Heart left ventricle (tissue), 16 donors: ENCODE measurements at regions of chr9 and their contacts with region 1.

Region 1: GRCh38 chr9:129610473-129611301 is 10.2 kb downstream of the C9orf50 start:
- DNase-seq: peak; percentile 82 to 92 (median 84)
- ATAC-seq: peak in 3 of 4 donors; percentile 12 to 66 (median 54)
- H3K4me3 ChIP-seq: peak overlapping the region; percentile 44 to 74 (median 66)
- H3K27ac ChIP-seq: peak overlapping the region; percentile 29 to 98 (median 90)
- H3K4me1 ChIP-seq: peaks cover 0 to 47% (median 39%) of the 10 kb centered on the region in 12 donors
- H3K27me3 ChIP-seq: no peaks in the 10 kb centered on the region
- CTCF ChIP-seq: peak; percentile 66 to 98 (median 91)
- POLR2A ChIP-seq: peak in 1 of 2 donors; percentile 41

Region 2: DNA sequence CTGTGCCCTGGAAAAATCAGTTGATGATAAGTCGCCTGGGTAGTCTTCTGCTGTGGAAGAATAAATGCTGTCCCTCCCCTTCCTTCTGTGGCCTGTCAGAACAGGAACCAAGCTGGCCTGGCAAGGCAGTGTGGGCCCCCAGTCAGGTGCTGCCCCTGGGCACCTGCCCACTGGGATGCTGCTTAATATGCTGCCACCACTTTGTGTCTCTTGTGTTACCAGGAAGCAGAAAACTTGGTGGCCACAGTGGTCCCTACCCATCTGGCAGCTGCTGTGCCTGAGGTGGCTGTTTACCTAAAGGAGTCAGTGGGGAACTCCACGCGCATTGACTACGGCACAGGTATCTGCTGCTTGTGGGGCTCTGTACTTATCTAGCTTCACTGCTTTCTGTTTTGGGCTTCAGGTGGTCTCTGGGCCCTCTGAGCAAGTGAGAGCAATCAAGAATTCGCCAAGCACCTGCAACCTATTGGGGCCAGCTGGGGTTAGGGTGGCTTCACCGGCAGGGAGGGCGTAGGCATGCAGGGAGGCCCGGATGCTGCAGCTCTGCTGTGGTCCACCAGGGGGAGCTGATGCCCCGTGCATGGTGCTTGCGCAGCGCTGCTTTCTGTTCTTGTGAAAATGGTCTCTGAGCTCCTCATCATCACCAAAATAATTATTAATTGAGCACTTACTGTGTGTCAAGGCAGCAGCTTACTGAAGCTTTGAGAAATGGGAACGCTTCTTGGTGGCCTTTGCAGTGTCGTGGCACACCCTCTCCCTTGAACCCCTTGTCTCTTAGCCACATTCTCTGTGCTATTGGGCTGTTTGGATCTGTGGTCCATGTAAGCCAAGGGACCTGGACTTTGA is 479.2 kb before region 1 on chr9:
- intact Hi-C with region 1: loop called in 5 of 10 experiments (anchors 1 to 2 kb)
- DNase-seq: peak; percentile 75 to 87 (median 78)
- ATAC-seq: peak; percentile 55 to 88 (median 86)
- H3K4me3 ChIP-seq: no peak overlapping the region
- H3K27ac ChIP-seq: no peak overlapping the region
- H3K4me1 ChIP-seq: peaks cover 0 to 17% (median 0%) of the 10 kb centered on the region in 12 donors
- H3K27me3 ChIP-seq: no peaks in the 10 kb centered on the region
- CTCF ChIP-seq: peak; percentile 92 to 99 (median 98)
- POLR2A ChIP-seq: no peak

Region 3: DNA sequence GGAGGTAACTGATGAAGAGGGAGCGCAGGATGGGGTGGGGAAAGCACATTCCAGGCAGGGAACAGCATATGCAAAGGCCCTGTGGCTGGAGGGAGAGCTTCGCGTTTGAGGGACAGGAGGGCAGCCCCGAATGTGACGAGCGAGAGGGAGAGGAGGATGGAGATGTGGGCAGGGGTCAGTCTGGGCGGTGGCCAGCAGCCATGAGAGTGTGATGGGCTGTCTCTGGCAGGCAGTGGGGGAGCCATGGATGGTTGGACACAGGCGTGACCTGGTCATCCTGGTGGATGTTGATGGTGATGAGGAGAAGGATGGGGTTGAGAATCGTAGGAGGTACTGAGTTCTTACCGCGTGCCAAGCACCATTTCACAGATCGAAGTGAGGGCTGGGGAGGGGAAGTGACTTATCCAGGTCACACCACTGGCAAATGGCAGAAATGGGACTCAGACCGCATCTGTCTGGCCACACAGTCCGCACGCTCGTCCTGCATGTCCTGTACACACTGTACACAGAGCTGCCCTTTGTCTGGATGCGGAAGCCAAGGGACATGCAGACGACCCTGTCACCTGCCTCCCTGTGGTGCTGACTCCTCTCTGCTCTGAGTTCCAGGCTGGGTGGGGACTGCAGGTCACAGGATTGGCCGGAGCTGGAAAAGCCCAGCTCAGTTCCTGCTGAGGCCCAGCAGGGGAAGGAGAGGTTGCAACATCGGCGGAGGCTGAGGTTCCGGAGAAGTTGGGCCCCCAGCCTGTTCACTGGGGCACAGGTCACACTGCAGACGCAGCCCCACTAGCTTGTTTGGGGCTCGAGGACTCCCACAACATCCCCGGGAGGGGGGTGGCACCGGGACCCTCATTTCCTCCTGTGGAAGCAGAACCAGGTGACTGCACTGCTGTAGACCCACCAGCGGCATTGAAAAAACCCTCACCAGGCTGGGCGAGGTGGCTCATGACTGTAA is 267.0 kb before region 1 on chr9:
- intact Hi-C with region 1: loop called in 1 of 10 experiments (anchors 10 kb)
- DNase-seq: peak; percentile 66 to 85 (median 75)
- ATAC-seq: peak; percentile 56 to 83 (median 76)
- H3K4me3 ChIP-seq: no peak overlapping the region
- H3K27ac ChIP-seq: peak overlapping the region in 10 of 12 donors; percentile 12 to 94 (median 44)
- H3K4me1 ChIP-seq: peaks cover 0 to 78% (median 5%) of the 10 kb centered on the region in 12 donors
- H3K27me3 ChIP-seq: no peaks in the 10 kb centered on the region
- CTCF ChIP-seq: no peak
- POLR2A ChIP-seq: peak in 1 of 2 donors; percentile 25

Region 4: DNA sequence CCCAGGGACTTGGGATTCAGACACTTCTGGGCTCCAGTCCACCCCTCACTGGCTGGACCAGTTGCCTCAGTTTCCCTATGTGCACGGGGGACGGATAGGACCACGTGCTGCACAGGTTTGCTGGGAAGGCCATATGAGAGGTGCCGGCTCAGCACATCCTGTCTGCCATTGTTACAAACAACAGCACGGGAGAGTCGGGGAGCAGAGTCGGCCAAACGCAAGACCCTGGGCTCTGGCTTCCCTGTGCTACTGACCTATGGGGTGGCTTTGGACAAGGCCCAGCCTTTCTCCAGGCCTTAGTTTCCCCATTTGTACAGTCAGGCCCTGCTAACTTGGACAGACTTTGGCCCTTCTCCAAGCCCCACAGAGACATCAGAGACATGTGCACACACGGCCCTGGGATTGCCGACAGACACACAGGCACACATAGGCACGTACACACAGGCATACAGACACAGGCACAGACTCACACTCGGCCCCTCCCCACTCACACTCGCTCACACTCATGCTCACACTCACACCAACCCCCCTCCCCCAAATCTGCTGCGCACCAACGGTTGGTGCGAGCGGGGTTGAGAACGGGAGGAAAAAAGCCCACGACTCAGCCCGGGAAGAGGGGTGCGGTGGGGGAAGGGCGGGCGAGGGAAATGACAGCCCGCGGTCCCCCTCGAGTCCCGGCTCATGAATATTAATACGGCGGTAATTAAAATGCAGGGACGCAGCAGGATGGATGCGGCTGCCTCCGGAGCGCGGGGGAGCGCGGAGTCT is 122.9 kb before region 1 on chr9:
- intact Hi-C with region 1: loop called in 5 of 10 experiments (anchors 2 to 5 kb)
- DNase-seq: peak; percentile 56 to 79 (median 72)
- ATAC-seq: peak in 2 of 4 donors; percentile 2 to 3
- H3K4me3 ChIP-seq: peak overlapping the region; percentile 21 to 68 (median 60)
- H3K27ac ChIP-seq: peak overlapping the region; percentile 93 to 100 (median 99)
- H3K4me1 ChIP-seq: peaks cover 23 to 93% (median 73%) of the 10 kb centered on the region in 12 donors
- H3K27me3 ChIP-seq: no peaks in the 10 kb centered on the region
- CTCF ChIP-seq: no peak
- POLR2A ChIP-seq: no peak

Region 5: GRCh38 chr9:129550199-129550839 is 60.4 kb before region 1 on chr9:
- intact Hi-C with region 1: loop called in 1 of 10 experiments (anchors 2 kb)
- DNase-seq: peak; percentile 83 to 90 (median 87)
- ATAC-seq: peak; percentile 55 to 93 (median 86)
- H3K4me3 ChIP-seq: peak overlapping the region; percentile 42 to 66 (median 58)
- H3K27ac ChIP-seq: peak overlapping the region in 11 of 12 donors; percentile 56 to 86 (median 81)
- H3K4me1 ChIP-seq: peaks cover 0 to 31% (median 24%) of the 10 kb centered on the region in 12 donors
- H3K27me3 ChIP-seq: peaks cover 0 to 14% (median 0%) of the 10 kb centered on the region in 9 donors
- CTCF ChIP-seq: peak in 1 of 12 donors; percentile 8
- POLR2A ChIP-seq: no peak

Region 6: DNA sequence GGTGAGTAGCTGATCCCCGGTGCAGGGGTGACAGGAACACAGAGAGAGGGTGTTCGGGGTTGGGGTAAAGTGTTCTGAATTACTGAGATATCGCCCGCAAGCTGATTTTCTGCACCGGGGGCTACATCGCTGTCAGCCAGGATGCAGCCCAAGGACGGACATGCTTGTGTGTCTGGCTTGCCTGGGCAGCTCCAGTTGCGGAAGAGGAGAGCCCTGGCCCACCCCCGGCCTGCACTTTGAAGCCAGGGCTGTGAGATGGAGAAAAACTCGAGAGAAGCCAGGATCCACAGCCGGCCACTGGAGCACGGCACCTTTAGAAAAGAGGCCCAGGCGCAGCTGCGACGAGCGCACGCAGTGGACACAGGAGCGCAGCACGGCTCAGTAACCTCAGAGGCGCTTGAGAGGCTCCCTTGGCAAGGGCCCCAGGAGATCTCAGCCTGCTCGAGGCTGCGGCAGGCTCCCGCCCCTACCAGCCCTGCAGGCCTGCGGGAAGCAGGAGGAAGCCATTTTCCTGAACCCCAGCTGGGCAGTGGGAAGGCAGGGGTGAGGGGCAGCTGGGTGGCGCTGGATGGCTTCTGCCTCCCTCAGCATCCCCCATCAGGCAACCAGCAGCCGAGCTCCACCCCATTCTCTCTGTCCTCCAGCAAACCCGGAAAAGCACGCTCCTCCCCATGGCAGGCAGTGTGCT is 48.9 kb before region 1 on chr9:
- intact Hi-C with region 1: no loop called
- DNase-seq: no peak
- ATAC-seq: no peak
- H3K4me3 ChIP-seq: no peak overlapping the region
- H3K27ac ChIP-seq: no peak overlapping the region
- H3K4me1 ChIP-seq: peaks cover 0 to 8% (median 0%) of the 10 kb centered on the region in 12 donors
- H3K27me3 ChIP-seq: no peaks in the 10 kb centered on the region
- CTCF ChIP-seq: no peak
- POLR2A ChIP-seq: no peak